Heart left ventricle (tissue), 16 donors: ENCODE measurements at regions of chr2 and their contacts with region 1.

Region 1: GRCh38 chr2:199258291-199258690 is 199.4 kb downstream of the SATB2 start:
- DNase-seq: no peak
- ATAC-seq: no peak
- H3K4me3 ChIP-seq: no peak overlapping the region
- H3K27ac ChIP-seq: no peak overlapping the region
- H3K4me1 ChIP-seq: no peaks in the 10 kb centered on the region
- H3K27me3 ChIP-seq: no peaks in the 10 kb centered on the region
- CTCF ChIP-seq: no peak
- POLR2A ChIP-seq: no peak

Region 2: GRCh38 chr2:199378948-199379650 is 120.8 kb after region 1 on chr2:
- intact Hi-C with region 1: loop called in 1 of 10 experiments (anchors 10 kb)
- DNase-seq: no peak
- ATAC-seq: no peak
- H3K4me3 ChIP-seq: no peak overlapping the region
- H3K27ac ChIP-seq: no peak overlapping the region
- H3K4me1 ChIP-seq: no peaks in the 10 kb centered on the region
- H3K27me3 ChIP-seq: no peaks in the 10 kb centered on the region
- CTCF ChIP-seq: no peak
- POLR2A ChIP-seq: no peak